Right ventricle myocardium inferior (tissue), 1 donor: ENCODE measurements at regions of chr13 and their contacts with region 1.

Region 1: DNA sequence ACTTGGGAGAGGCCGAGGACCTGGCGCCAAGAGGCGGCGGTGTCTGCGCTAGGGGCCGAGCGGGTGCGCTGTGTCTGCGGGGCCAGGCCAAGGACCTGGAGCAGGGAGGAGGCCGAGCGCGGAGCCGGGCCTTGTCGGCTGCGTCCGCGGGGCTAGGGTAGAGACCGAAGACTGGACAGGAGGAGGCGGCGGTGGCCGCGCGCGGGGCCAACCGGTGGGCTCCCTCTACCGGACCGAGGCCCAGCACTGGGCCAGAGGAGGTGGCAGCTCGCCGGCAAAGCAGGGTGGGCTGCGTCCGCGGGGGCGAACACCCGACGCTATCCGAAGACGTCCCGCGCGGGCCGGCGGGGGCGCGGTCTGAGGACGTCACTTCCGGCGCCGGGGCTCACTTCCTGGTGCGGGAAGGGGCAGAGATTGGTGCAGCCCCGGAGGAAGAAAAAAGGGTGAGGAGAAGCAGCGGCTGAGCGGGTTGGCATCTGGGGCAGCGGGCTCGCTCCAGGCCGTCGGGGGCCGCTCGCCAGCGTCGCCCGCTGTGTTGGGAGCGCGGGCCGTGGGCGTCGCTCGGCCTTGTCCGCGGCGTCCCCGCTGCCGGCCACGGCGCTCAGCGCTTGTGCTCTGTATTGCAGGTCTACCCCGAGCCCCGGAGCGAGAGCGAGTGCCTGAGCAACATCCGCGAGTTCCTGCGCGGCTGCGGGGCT is 38.3 kb downstream of the ARHGEF7 start:
- DNase-seq: peak; percentile 94
- ATAC-seq: peak; percentile 97

Region 2: GRCh38 chr13:110869805-110870706 is 283.4 kb before region 1 on chr13:
- intact Hi-C with region 1: no loop called
- DNase-seq: peak; percentile 83
- ATAC-seq: peak; percentile 78

Region 3: DNA sequence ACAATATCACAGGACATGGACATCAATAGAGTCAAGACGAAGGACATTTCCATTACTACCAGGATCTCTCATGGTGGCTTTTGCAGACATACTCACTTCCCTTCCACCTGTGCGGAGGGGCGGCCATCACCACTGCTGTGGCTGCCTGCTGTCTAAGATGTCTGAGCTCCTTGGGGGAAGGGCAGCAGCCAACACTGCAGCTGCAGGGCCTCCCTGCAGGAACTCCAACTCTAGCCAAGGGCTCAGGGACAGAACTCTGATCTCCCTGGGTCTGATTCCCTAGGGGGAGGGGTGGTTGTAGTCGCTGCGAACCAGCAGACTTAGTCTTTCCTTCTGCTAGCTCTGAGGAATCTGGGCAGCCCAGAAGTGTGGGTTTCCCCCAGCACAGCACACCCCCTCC is 159.6 kb before region 1 on chr13:
- intact Hi-C with region 1: no loop called
- DNase-seq: no peak
- ATAC-seq: no peak

Region 4: GRCh38 chr13:111095031-111095840 is 58.2 kb before region 1 on chr13:
- intact Hi-C with region 1: no loop called
- DNase-seq: no peak
- ATAC-seq: no peak

Region 5: GRCh38 chr13:111114362-111115060 is 38.9 kb before region 1 on chr13:
- intact Hi-C with region 1: loop called (anchors 2 kb)
- DNase-seq: peak; percentile 80
- ATAC-seq: peak; percentile 66

Region 6: DNA sequence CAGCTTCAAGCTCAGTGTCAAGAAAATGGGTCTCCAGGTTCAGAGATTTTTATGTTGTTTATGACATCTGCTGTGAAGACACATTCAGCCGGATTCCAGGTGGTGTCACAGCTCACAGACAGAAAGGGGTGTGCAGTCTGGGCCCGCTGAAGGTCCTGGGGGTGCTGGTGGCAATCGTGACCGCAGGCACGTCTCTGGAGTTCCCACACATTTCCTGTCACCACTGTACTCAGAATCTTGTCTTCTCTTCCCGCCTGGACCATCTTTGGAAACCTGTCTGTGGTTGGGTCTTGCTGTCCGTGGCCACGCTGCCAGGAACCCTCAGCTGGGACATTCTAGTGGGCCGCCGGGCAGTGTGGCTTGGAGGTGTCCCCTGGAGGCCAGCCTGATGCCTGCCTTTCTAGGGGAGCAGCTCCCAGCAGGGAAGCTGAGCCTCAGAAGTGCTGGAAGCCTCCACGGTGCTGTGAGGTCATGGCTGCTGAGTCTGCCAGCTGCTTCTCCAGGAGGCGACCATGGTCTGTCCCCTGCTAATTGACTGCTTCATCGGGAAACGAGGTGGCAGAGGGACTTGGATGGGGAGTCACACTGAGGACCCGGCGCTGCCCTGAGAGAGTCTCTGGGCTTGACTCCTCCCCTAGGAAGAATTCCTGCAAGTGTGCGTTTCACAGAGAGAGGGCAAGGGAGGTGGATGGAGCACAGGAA is 170.7 kb after region 1 on chr13:
- intact Hi-C with region 1: no loop called
- DNase-seq: no peak
- ATAC-seq: no peak